Mammary epithelial cell (primary cell): ENCODE measurements at regions of chr18 and their contacts with region 1.

Region 1: GRCh38 chr18:48951448-48952286 is 902 bp upstream of the SMAD7 start:
- DNase-seq: peak; percentile 87
- H3K4me3 ChIP-seq: peak overlapping the region; percentile 65 to 91 (median 91)
- H3K27ac ChIP-seq: peak overlapping the region; percentile 92
- H3K4me1 ChIP-seq: peaks cover 47% of the 10 kb centered on the region
- H3K27me3 ChIP-seq: no peaks in the 10 kb centered on the region
- CTCF ChIP-seq: peak in 1 of 2 donors; percentile 34

Region 2: GRCh38 chr18:48675352-48675761 is 276.3 kb before region 1 on chr18:
- CTCF ChIA-PET with region 1: no interaction called
- dilution Hi-C with region 1: no loop called
- in situ Hi-C with region 1: no loop called
- intact Hi-C with region 1: loop called (anchors 2 kb)
- DNase-seq: peak; percentile 71
- H3K4me3 ChIP-seq: no peak overlapping the region
- H3K27ac ChIP-seq: no peak overlapping the region
- H3K4me1 ChIP-seq: peaks cover 3% of the 10 kb centered on the region
- H3K27me3 ChIP-seq: no peaks in the 10 kb centered on the region
- CTCF ChIP-seq: peak; percentile 95 to 96

Region 3: DNA sequence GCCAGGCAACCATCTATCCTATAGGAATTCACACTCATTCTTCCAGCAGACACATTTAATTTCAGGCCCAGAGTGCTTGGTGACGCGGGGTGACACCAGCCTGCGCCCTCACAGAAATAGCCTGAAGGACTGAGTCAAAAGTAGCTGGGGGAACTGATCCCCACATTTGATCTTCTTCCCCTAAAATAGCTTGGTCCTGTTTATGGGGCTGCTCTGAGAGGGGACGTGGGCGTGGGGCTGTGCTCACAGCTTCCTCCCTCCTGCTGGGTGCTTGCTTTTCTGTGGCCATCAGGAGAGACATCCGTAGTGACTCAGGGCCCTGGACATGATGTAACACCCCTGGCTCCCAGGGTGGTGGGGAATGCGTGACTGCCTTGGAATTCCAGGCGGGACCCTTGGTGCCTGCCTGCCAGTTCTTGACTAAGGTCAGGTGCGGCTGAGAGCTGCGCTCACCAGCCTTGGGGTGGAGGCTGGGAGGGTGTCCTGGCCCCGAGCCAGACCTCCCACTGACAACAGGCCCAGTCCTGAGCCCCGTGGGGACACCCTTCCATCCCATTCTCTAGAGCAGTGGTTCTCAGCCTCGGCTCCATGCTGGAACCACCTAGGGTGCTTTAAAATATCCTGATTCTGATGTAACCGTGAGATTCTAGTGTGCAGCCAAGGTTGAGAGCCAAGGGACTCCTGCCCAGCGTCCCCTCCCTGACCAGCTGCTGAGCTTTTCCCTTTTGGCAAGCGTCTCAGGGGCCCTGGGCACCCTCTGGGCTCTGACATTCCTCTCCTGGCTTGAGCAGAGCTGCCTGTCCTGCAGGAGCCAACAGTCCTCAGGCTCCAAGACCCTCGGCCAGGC is 46.5 kb after region 1 on chr18:
- CTCF ChIA-PET with region 1: no interaction called
- dilution Hi-C with region 1: loop called (anchors 5 kb)
- in situ Hi-C with region 1: no loop called
- intact Hi-C with region 1: loop called (anchors 1 kb)
- DNase-seq: peak; percentile 96
- H3K4me3 ChIP-seq: no peak overlapping the region
- H3K27ac ChIP-seq: peak overlapping the region; percentile 90
- H3K4me1 ChIP-seq: peaks cover 25% of the 10 kb centered on the region
- H3K27me3 ChIP-seq: no peaks in the 10 kb centered on the region
- CTCF ChIP-seq: no peak

Region 4: GRCh38 chr18:49041435-49042245 is 90.0 kb after region 1 on chr18:
- CTCF ChIA-PET with region 1: no interaction called
- dilution Hi-C with region 1: no loop called
- in situ Hi-C with region 1: loop called in 1 of 2 experiments (anchors 10 kb)
- intact Hi-C with region 1: loop called (anchors 1 kb)
- DNase-seq: peak; percentile 40
- H3K4me3 ChIP-seq: no peak overlapping the region
- H3K27ac ChIP-seq: no peak overlapping the region
- H3K4me1 ChIP-seq: no peaks in the 10 kb centered on the region
- H3K27me3 ChIP-seq: no peaks in the 10 kb centered on the region
- CTCF ChIP-seq: peak; percentile 79 to 80

Region 5: GRCh38 chr18:49238433-49239042 is 286.9 kb after region 1 on chr18:
- CTCF ChIA-PET with region 1: no interaction called
- dilution Hi-C with region 1: no loop called
- in situ Hi-C with region 1: no loop called
- intact Hi-C with region 1: loop called (anchors 1 kb)
- DNase-seq: no peak
- H3K4me3 ChIP-seq: no peak overlapping the region
- H3K27ac ChIP-seq: no peak overlapping the region
- H3K4me1 ChIP-seq: peaks cover 2% of the 10 kb centered on the region
- H3K27me3 ChIP-seq: no peaks in the 10 kb centered on the region
- CTCF ChIP-seq: peak; percentile 44 to 53